Sciatic nerve (tissue), 2 donors: ENCODE measurements at regions of chr12 and their contacts with region 1.

Region 1: GRCh38 chr12:62210422-62210821 is 49.8 kb upstream of the USP15 start:
- DNase-seq: no peak
- ATAC-seq: no peak

Region 2: DNA sequence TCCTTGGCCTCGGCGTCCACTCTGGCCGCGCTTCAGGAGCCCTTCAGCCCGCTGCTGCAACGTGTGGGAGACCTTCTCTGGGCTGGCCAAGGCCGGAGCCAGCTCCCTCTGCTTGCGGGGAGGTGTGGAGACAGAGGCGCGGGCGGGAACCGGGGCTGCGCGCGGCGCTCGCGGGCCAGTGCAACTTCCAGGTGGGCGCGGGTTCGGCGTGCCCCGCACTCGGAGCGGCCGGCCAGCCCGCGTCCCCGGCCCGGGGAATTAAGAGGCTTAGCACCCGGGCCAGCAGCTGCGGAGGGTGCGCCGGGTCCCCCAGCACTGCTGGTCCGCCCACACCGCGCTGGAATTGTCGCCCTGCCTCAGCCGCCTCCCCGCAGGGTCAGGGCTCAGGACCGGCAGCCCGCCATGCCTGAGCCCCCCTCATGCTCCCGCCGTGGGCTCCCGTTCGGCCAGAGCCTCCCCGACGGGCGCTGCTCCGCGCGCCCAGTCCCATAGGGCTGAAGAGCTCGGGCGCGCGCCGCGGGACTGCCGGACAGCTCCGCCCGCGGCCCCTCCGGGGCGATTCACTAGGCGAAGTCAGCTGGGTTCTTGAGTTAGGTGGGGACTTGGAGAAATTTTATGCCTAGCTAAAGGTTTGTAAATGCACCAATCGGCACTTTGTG is 1940.7 kb before region 1 on chr12:
- intact Hi-C with region 1: loop called (anchors 5 kb)
- DNase-seq: no peak
- ATAC-seq: no peak